Activated CD4-positive, alpha-beta T cell treated with anti-CD3 and anti-CD28 coated beads for 36 hours (primary cell): ENCODE measurements at regions of chr12 and their contacts with region 1.

Region 1: GRCh38 chr12:92928962-92929915 is at the start of gene EEA1:
- DNase-seq: peak; percentile 99
- ATAC-seq: peak; percentile 80
- H3K4me3 Mint-ChIP-seq: peak within 1 kb of the TSS; percentile 86
- H3K27ac Mint-ChIP-seq: peak within 1 kb of the TSS; percentile 96
- H3K4me1 Mint-ChIP-seq: peaks cover 34% of the 10 kb centered on the region
- H3K27me3 Mint-ChIP-seq: no peaks in the 10 kb centered on the region
- total RNA-seq, gene EEA1: 20.2 to 33.2 TPM

Region 2: DNA sequence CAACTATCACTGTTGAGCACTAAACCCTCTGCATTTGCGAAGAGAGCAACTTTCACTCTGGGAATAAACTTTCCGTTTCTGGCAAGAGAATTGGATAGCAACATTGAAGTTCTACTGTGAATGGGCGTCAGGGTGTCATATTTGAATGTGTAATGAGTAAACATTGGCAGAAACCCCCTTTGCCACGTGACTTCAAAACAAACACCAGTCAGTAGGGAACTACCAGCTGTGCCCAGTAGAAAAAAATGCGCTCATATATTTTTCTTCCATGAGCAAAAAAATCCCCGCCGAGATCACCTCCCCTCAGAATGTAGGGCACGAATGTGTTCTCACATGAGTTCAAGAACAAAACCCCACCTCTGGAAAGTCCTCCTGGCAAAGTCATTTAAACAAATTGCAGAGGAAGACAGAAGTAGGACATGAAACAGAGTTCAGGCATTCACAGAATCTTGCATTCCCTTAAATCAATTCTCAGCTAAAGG is 864.2 kb before region 1 on chr12:
- CTCF ChIA-PET with region 1: no interaction called
- POLR2A ChIA-PET with region 1: no interaction called
- intact Hi-C with region 1: loop called in 1 of 2 experiments (anchors 10 kb)
- DNase-seq: peak; percentile 71
- ATAC-seq: peak; percentile 76
- H3K4me3 Mint-ChIP-seq: peak overlapping the region; percentile 30
- H3K27ac Mint-ChIP-seq: peak overlapping the region; percentile 89
- H3K4me1 Mint-ChIP-seq: peaks cover 57% of the 10 kb centered on the region
- H3K27me3 Mint-ChIP-seq: no peaks in the 10 kb centered on the region

Region 3: GRCh38 chr12:92570056-92570753 is 359.0 kb before region 1 on chr12:
- CTCF ChIA-PET with region 1: no interaction called
- POLR2A ChIA-PET with region 1: no interaction called
- intact Hi-C with region 1: no loop called
- DNase-seq: peak; percentile 58
- ATAC-seq: peak; percentile 92
- H3K4me3 Mint-ChIP-seq: no peak overlapping the region
- H3K27ac Mint-ChIP-seq: no peak overlapping the region
- H3K4me1 Mint-ChIP-seq: peaks cover 32% of the 10 kb centered on the region
- H3K27me3 Mint-ChIP-seq: no peaks in the 10 kb centered on the region

Region 4: DNA sequence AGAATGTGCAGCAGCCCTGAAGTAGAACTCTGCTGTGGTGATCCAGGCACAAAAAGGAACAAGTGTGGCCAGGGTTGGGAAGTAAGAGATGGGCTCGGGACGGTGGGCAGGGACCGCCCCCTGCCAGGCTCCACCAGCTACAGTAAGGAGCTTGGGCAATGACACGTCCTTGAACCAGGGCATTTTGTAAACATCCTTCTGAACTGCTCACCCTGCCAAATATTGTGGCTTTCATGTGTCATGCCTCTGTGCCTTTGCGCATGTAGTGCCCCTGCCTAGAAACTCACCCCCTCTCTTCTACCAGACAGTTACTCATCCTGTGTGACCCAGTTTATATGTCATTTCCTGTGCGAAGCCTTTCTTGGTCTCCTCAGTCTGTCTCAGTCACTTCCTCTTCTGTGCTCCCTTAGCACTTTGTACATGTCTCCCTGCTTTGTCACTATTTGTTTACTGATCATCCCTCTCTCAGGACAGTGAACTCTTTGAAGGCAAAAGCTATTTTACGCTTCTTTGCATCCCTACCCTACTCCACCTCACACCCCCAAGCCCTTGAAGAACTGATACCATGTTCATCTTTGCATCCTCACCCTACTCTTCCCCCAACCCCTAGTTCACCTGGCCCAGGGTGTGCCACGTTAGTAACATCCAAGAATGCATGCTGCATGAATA is 335.4 kb before region 1 on chr12:
- CTCF ChIA-PET with region 1: no interaction called
- POLR2A ChIA-PET with region 1: interaction called, 3 read pairs
- intact Hi-C with region 1: loop called in 1 of 2 experiments (anchors 5 kb)
- DNase-seq: peak; percentile 83
- ATAC-seq: peak; percentile 95
- H3K4me3 Mint-ChIP-seq: peak overlapping the region; percentile 5
- H3K27ac Mint-ChIP-seq: peak overlapping the region; percentile 92
- H3K4me1 Mint-ChIP-seq: peaks cover 84% of the 10 kb centered on the region
- H3K27me3 Mint-ChIP-seq: no peaks in the 10 kb centered on the region

Region 5: DNA sequence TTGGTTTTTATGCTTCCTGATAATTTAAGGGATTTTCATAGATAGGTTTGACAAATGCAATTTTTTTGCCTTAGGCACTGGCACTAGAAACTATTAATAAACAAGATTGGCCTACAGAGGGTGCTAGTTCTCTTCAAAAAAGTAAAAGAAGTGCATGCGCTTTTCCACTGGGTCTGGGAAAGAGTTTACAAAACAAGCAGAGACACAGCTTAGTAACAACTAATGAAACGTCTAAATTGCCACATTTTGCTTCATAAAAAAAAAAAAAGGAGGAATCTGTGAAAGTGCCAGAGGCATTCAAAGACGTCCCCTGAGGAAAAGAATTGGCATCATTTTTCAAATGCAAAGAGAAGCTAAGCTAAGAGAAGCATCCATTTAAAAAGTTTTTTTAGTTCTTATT is 58.1 kb after region 1 on chr12:
- CTCF ChIA-PET with region 1: interaction called, 10 read pairs
- POLR2A ChIA-PET with region 1: interaction called, 5 read pairs
- intact Hi-C with region 1: loop called (anchors 1 to 5 kb)
- DNase-seq: no peak
- ATAC-seq: no peak
- H3K4me3 Mint-ChIP-seq: peak overlapping the region; percentile 22
- H3K27ac Mint-ChIP-seq: peak overlapping the region; percentile 88
- H3K4me1 Mint-ChIP-seq: peaks cover 37% of the 10 kb centered on the region
- H3K27me3 Mint-ChIP-seq: no peaks in the 10 kb centered on the region

Region 6: DNA sequence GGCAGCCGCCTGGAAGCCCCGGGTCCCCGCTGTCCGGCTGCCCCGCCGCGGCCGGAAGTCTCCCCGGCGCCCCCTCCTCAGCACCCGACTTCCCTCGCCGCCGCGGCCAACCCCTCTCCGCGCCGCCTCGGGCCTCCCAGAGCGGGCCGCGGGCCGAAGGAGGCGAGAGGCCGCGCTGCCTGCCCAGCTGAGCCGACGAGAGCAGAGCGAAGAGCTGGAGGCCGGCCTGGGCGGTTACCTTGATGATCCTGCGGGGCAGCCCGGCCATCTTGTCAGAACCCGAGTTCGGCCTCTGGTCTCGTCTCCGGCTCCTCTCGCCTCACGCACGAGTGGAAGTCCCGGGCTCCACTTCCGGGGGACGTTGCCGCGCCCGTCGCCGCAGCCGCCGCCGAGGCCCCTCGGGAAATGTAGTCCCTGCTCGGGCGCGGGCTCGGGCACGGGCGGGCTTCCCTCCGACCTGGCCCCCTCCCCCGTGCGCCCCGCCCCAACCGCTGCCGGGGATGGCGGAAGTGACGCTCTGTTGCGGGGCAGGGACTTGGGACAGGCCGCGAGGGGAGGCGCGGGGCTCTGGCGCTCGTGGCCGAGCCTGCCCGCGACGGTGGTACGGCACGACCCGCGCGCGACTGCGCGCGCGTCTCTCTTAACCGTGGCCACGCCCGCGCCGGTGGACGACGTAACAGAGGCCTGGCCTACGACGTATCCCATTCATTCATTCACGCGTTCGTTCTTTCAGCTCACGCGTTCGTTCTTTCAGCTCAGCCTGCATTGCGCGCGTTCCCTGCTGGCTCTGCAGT is 512.6 kb after region 1 on chr12 and contains the start of gene UBE2N:
- CTCF ChIA-PET with region 1: no interaction called
- POLR2A ChIA-PET with region 1: interaction called, 5 read pairs
- intact Hi-C with region 1: loop called (anchors 1 to 5 kb)
- DNase-seq: peak; percentile 98
- ATAC-seq: peak; percentile 84
- H3K4me3 Mint-ChIP-seq: peak within 1 kb of the TSS; percentile 99
- H3K27ac Mint-ChIP-seq: peak within 1 kb of the TSS; percentile 99
- H3K4me1 Mint-ChIP-seq: peaks cover 48% of the 10 kb centered on the region
- H3K27me3 Mint-ChIP-seq: no peaks in the 10 kb centered on the region
- total RNA-seq, gene UBE2N: 186 to 279 TPM

Region 7: GRCh38 chr12:94207849-94208621 is 1278.8 kb after region 1 on chr12:
- CTCF ChIA-PET with region 1: no interaction called
- POLR2A ChIA-PET with region 1: no interaction called
- intact Hi-C with region 1: loop called in 1 of 2 experiments (anchors 5 kb)
- DNase-seq: peak; percentile 62
- ATAC-seq: peak; percentile 80
- H3K4me3 Mint-ChIP-seq: peak overlapping the region; percentile 68
- H3K27ac Mint-ChIP-seq: peak overlapping the region; percentile 99
- H3K4me1 Mint-ChIP-seq: peaks cover 51% of the 10 kb centered on the region
- H3K27me3 Mint-ChIP-seq: no peaks in the 10 kb centered on the region